Endothelial cell of umbilical vein (primary cell): ENCODE measurements at regions of chr16 and their contacts with region 1.

Region 1: DNA sequence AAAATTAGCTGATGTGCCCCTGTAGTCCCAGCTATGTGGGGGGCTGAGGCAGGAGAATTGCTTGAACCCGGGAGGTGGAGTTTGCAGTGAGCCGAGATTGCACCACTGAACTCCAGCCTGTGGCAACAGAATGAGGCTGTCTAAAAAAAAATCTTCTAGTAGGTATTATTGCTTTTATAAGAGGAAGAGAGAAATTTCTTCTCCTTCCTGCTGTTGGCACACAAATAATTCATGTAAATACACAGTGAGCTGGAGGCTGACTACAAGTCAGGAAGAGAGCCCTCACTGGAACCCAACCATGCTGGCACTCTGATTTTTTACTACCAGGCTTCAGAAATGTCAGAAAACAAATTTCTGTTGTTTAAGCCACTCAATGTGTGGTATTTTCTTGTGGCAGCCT is 6.7 kb downstream of the PRDM7 start:
- DNase-seq: no peak
- H3K4me3 ChIP-seq: no peak overlapping the region
- H3K27ac ChIP-seq: no peak overlapping the region
- H3K4me1 ChIP-seq: no peaks in the 10 kb centered on the region
- H3K27me3 ChIP-seq: peaks cover 0 to 3% of the 10 kb centered on the region in 2 experiments
- CTCF ChIP-seq: no peak
- POLR2A ChIP-seq: no peak

Region 2: GRCh38 chr16:90081606-90081970 is 11.1 kb after region 1 on chr16:
- CTCF ChIA-PET with region 1: interaction called, 33 read pairs
- POLR2A ChIA-PET with region 1: no interaction called
- dilution Hi-C with region 1: no loop called
- intact Hi-C with region 1: no loop called
- DNase-seq: no peak
- H3K4me3 ChIP-seq: no peak overlapping the region
- H3K27ac ChIP-seq: no peak overlapping the region
- H3K4me1 ChIP-seq: peaks cover 10% of the 10 kb centered on the region
- H3K27me3 ChIP-seq: peaks cover 2 to 7% of the 10 kb centered on the region in 2 experiments
- CTCF ChIP-seq: no peak
- POLR2A ChIP-seq: no peak